ENCODE measurements at regions of chr6 and their contacts with region 1.

Region 1: DNA sequence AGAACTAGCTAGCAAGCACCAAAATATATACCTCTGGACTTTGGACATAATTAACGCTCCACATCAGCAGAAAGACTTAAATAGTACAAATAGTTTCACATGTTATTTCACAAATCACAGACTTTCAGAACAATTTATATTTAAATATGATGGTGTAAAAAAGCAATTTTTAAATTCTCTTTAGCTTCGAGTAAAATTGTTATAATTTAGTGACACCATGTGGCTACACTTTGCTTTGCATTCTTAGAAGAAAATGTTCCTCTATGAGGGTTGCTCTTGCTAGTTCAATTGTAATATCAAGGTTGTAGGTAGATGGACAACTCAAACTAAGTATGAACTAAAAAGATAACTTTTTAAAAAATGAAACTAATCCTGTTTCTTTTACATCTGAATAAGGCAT is 69.0 kb downstream of the BTBD9 start:
- DNase-seq: no peak
- H3K4me3 Mint-ChIP-seq: no peak overlapping the region
- H3K27ac Mint-ChIP-seq: no peak overlapping the region
- H3K4me1 Mint-ChIP-seq: peaks cover 11% of the 10 kb centered on the region
- H3K27me3 Mint-ChIP-seq: no peaks in the 10 kb centered on the region

Region 2: DNA sequence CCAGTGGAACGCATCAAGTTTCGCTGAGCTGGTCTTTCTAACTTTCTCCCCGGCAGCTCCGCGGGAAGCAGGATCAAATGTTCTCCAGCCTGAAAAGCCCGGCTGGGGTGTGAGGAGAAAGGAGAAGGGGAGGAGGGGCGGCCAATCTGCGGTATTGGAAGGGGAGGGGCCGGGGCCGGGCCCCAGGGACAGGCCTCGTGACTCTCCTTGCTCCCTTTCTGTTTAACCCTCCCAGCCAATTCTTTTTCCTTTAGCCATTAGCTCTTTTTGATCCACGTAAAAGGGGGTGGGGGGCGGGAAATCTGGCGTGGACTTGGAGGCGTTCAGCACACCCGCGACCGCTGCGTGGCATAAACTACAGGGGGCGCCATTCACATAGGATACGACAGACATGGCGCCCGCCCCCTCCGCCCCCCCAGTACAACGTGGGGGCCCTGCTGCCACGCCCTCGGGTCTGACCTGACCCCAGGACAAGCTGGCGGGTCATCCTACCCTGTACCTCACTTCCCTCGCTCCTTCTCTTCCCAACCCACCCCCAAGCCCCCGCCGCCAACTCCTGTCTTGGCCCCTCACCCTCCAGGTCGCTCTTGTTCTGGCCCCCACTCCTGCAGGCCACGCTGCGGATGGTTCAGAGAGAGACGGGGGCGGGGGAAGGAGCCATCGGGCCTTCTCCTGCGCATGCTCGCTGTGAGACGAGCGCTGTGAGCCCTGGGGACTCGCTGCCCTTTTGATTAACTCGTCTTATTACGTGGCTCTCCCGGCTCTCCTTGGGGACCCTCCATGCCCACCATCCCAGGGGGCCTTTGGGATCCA is 865.3 kb before region 1 on chr6:
- intact Hi-C with region 1: loop called (anchors 5 kb)
- DNase-seq: peak; percentile 36
- H3K4me3 Mint-ChIP-seq: peak overlapping the region; percentile 79
- H3K27ac Mint-ChIP-seq: peak overlapping the region; percentile 42
- H3K4me1 Mint-ChIP-seq: peaks cover 6% of the 10 kb centered on the region
- H3K27me3 Mint-ChIP-seq: peaks cover 11% of the 10 kb centered on the region

Region 3: GRCh38 chr6:38057994-38058393 is 512.8 kb before region 1 on chr6:
- intact Hi-C with region 1: loop called (anchors 10 kb)
- DNase-seq: no peak
- H3K4me3 Mint-ChIP-seq: no peak overlapping the region
- H3K27ac Mint-ChIP-seq: peak overlapping the region; percentile 18
- H3K4me1 Mint-ChIP-seq: peaks cover 23% of the 10 kb centered on the region
- H3K27me3 Mint-ChIP-seq: no peaks in the 10 kb centered on the region

Region 4: GRCh38 chr6:38639498-38640215 is 68.9 kb after region 1 on chr6 and contains the start of gene BTBD9:
- intact Hi-C with region 1: loop called (anchors 1 kb)
- DNase-seq: peak; percentile 80
- H3K4me3 Mint-ChIP-seq: peak within 1 kb of the TSS; percentile 92
- H3K27ac Mint-ChIP-seq: peak within 1 kb of the TSS; percentile 91
- H3K4me1 Mint-ChIP-seq: peaks cover 47% of the 10 kb centered on the region
- H3K27me3 Mint-ChIP-seq: no peaks in the 10 kb centered on the region
- total RNA-seq, gene BTBD9: 14.5 and 16.4 TPM in 2 replicates

Region 5: GRCh38 chr6:38702558-38703397 is 132.0 kb after region 1 on chr6 and contains the start of gene GLO1:
- intact Hi-C with region 1: loop called (anchors 5 kb)
- DNase-seq: peak; percentile 95
- H3K4me3 Mint-ChIP-seq: peak within 1 kb of the TSS; percentile 91
- H3K27ac Mint-ChIP-seq: peak within 1 kb of the TSS; percentile 85
- H3K4me1 Mint-ChIP-seq: peaks cover 45% of the 10 kb centered on the region
- H3K27me3 Mint-ChIP-seq: peaks cover 7% of the 10 kb centered on the region
- total RNA-seq, gene GLO1: 109 and 110 TPM in 2 replicates

Measured in activated T-helper 1 cell treated with anti-CD3 and anti-CD28 coated beads, Interleukin-12 subunit alpha, Interleukin-12 subunit beta, Interleukin-2, Interleukin-4 antibody, amounts not matched to agents 30 ng/mL and 10 ng/mL and 1 ng/mL, durations not matched to agents 14 hours and 24 hours and 36 hours (primary cell).